Activated CD4-positive, alpha-beta memory T cell treated with anti-CD3 and anti-CD28 coated beads for 36 hours (primary cell): ENCODE measurements at regions of chr11 and their contacts with region 1.

Region 1: DNA sequence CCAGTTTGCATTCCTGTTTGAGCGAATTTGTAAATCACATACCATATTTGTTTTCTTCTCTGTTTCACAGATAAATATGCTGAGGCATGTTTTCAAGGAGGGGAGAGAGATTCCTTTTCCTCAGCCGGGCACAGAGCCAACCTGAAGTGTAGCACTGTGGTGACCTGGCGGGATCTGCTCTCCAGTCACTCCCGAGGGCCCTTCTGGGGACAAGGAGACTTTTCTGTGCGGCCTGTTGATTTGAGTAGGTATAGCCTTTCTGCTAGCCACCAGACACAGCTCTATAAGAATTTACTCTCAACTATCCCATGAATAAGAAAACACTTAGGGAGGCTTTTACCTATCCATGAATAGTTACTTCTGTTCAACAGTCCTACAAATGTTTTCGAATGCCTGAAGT is 63.5 kb upstream of the FDX1 start:
- DNase-seq: no peak
- H3K4me3 Mint-ChIP-seq: no peak overlapping the region
- H3K27ac Mint-ChIP-seq: no peak overlapping the region
- H3K4me1 Mint-ChIP-seq: peaks cover 8% of the 10 kb centered on the region
- H3K27me3 Mint-ChIP-seq: peaks cover 6% of the 10 kb centered on the region

Region 2: DNA sequence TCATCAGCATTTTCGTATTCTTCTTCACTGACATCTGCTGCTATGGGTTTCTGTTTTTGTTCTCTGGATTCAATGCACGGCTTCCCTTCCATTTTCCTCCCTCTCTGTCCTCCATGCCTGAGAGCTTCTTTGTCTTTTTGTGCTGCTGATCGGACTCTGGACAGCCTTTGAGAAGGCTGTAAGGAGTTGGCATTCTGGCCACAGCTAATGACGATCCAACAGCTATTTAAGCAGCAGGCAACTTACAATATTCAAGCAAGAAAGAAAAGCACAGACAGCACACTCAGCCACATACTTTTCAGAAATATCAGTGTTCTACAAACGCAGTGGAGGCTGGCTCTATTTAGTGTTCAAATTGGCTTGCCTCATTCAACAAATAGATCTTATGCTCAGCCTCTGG is 334.0 kb before region 1 on chr11:
- CTCF ChIA-PET with region 1: no interaction called
- POLR2A ChIA-PET with region 1: no interaction called
- intact Hi-C with region 1: no loop called
- DNase-seq: no peak
- H3K4me3 Mint-ChIP-seq: no peak overlapping the region
- H3K27ac Mint-ChIP-seq: no peak overlapping the region
- H3K4me1 Mint-ChIP-seq: no peaks in the 10 kb centered on the region
- H3K27me3 Mint-ChIP-seq: no peaks in the 10 kb centered on the region

Region 3: DNA sequence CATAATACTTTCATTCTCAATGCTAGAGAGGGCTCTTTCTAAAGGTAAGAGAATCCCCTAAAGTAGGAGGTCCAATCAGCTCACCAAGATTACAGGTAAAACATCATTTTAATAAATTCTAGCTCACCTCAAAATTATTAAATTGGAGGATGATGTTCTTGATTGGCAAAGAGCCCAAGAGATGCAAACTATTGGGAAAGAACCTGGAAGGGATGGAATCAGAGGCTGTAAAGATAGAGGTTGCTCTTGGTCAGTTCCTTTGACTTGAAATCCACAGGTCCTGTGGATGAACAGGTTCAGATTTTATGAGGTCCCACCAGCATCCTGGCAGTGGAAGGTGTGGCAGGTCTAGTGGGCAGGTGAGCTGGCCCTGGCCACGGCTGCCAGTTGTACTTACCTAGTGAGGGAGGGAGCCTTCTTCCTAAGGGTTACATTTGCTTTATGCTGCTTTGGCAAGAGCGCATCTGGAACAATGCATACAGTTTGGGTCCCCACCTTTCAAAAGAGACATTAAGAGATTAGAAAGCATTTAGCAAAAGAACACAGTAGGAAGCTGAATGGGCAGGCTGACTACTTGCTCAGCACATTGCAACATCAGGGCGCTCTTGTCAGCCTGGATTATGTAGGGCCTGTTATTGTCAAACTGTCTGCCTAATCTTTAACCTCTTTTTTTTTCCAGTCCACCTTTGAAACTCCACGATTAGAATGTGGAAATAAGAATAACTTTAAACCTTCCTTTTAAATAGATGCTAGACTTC is 166.9 kb before region 1 on chr11:
- CTCF ChIA-PET with region 1: interaction called, 75 read pairs
- POLR2A ChIA-PET with region 1: no interaction called
- intact Hi-C with region 1: loop called (anchors 1 kb)
- DNase-seq: no peak
- H3K4me3 Mint-ChIP-seq: no peak overlapping the region
- H3K27ac Mint-ChIP-seq: no peak overlapping the region
- H3K4me1 Mint-ChIP-seq: no peaks in the 10 kb centered on the region
- H3K27me3 Mint-ChIP-seq: peaks cover 3% of the 10 kb centered on the region